Activated CD4-positive, alpha-beta memory T cell treated with anti-CD3 and anti-CD28 coated beads for 36 hours (primary cell): ENCODE measurements at regions of chr13 and their contacts with region 1.

Region 1: DNA sequence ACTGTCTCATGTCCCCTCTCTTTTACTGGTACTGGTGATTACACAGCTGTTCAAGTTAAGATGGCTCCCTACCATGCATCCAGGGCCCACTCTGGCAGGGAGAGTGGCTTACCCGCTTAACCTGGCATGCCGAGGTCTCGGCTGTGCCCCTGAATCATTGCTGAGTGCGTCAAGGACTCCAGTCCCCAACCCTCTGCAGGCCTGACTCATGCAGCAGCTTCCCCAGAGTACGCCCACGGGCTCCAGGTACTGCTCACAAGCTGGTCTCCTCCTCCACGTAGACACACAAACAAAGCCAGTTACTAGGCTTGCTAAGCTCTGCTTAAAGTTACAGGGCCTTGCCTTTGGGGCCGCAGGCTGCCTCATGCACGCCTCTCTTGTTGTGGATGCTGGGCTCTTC is 447.4 kb downstream of the COG6 start:
- DNase-seq: peak; percentile 97
- H3K4me3 Mint-ChIP-seq: peak overlapping the region; percentile 56
- H3K27ac Mint-ChIP-seq: peak overlapping the region; percentile 98
- H3K4me1 Mint-ChIP-seq: peaks cover 55% of the 10 kb centered on the region
- H3K27me3 Mint-ChIP-seq: no peaks in the 10 kb centered on the region

Region 2: GRCh38 chr13:39777527-39778061 is 325.3 kb before region 1 on chr13:
- CTCF ChIA-PET with region 1: interaction called, 3 read pairs
- POLR2A ChIA-PET with region 1: no interaction called
- intact Hi-C with region 1: loop called (anchors 2 kb)
- DNase-seq: peak; percentile 72
- H3K4me3 Mint-ChIP-seq: peak overlapping the region; percentile 4
- H3K27ac Mint-ChIP-seq: peak overlapping the region; percentile 92
- H3K4me1 Mint-ChIP-seq: peaks cover 52% of the 10 kb centered on the region
- H3K27me3 Mint-ChIP-seq: no peaks in the 10 kb centered on the region

Region 3: DNA sequence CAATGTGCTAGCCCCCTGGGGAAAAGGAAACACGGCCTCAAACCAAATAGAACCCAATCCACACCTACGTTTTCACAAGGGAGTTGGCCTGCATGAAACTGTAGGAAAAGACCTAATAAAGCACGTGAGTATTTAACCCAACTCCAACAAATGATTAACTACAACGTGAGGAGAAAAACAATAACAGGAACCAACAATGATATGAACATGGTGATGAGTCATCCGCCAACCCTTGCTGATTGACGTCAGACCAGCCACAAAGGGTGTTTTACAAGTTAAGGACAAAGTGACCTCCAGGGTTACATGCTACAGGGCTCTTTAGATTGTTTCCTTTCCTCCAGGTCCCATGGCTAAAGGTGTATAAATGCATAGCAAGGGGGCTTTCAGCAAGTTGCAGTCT is 13.2 kb after region 1 on chr13:
- CTCF ChIA-PET with region 1: interaction called, 3 read pairs
- POLR2A ChIA-PET with region 1: interaction called, 6 read pairs
- intact Hi-C with region 1: loop called (anchors 1 kb)
- DNase-seq: peak; percentile 77
- H3K4me3 Mint-ChIP-seq: no peak overlapping the region
- H3K27ac Mint-ChIP-seq: peak overlapping the region; percentile 78
- H3K4me1 Mint-ChIP-seq: peaks cover 30% of the 10 kb centered on the region
- H3K27me3 Mint-ChIP-seq: no peaks in the 10 kb centered on the region

Region 4: GRCh38 chr13:40126306-40127085 is 23.6 kb after region 1 on chr13:
- CTCF ChIA-PET with region 1: no interaction called
- POLR2A ChIA-PET with region 1: no interaction called
- intact Hi-C with region 1: no loop called
- DNase-seq: no peak
- H3K4me3 Mint-ChIP-seq: no peak overlapping the region
- H3K27ac Mint-ChIP-seq: no peak overlapping the region
- H3K4me1 Mint-ChIP-seq: peaks cover 41% of the 10 kb centered on the region
- H3K27me3 Mint-ChIP-seq: no peaks in the 10 kb centered on the region

Region 5: DNA sequence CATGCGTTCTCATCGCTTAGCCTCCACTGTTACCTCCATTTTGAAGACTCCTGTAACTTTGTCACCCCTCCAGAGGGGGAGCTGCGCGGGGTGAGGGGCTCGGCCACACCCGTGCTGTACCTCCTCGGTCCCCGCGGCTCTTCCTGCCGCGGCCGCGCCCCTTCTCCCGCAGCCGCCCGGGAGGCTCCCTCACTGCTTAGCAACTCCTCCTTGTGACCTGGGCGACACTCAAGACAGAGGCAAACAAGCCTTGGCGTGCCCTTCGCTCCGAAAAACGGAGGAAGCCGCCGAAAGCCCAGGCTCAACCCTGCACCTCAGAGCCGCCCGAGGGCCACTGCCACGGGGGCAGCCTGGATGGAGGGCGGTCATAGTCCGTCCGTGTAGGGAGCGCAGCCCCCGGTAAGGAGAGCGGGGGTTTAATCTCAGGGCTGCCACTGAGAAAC is 69.3 kb after region 1 on chr13:
- CTCF ChIA-PET with region 1: no interaction called
- POLR2A ChIA-PET with region 1: no interaction called
- intact Hi-C with region 1: loop called (anchors 1 kb)
- DNase-seq: no peak
- H3K4me3 Mint-ChIP-seq: no peak overlapping the region
- H3K27ac Mint-ChIP-seq: no peak overlapping the region
- H3K4me1 Mint-ChIP-seq: peaks cover 23% of the 10 kb centered on the region
- H3K27me3 Mint-ChIP-seq: no peaks in the 10 kb centered on the region

Region 6: DNA sequence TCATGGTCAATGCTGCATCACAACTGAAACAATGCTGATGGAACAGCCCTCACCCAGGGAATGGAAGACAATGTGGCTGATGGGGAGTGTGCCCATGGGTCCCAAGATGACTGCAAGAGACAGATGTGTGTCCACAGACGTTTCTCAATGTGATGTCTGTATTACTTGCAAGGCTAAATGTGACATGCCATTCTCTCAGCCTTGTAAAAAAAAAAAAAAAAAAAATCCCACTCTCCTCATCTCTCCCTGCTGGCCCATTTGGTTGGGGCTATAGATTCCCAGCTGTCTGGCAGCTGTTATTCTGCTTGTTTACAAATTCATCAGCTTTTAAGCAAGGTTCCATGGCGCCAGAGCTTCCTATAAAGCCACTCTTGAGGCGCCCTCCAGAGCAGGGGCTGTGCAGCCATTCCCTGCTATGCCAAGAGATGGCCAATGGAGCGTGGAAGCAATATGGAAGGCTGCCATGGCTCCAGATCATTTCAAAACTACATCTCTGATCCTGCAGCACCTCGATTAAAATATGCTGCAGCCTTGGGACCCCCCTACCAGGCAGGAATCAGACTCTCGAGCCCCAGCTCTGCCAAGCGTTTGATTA is 268.8 kb after region 1 on chr13:
- CTCF ChIA-PET with region 1: no interaction called
- POLR2A ChIA-PET with region 1: no interaction called
- intact Hi-C with region 1: loop called (anchors 5 kb)
- DNase-seq: no peak
- H3K4me3 Mint-ChIP-seq: no peak overlapping the region
- H3K27ac Mint-ChIP-seq: no peak overlapping the region
- H3K4me1 Mint-ChIP-seq: peaks cover 34% of the 10 kb centered on the region
- H3K27me3 Mint-ChIP-seq: peaks cover 1% of the 10 kb centered on the region

Region 7: GRCh38 chr13:40597740-40598370 is 495.0 kb after region 1 on chr13:
- CTCF ChIA-PET with region 1: no interaction called
- POLR2A ChIA-PET with region 1: no interaction called
- intact Hi-C with region 1: loop called (anchors 2 kb)
- DNase-seq: peak; percentile 24
- H3K4me3 Mint-ChIP-seq: peak overlapping the region; percentile 39
- H3K27ac Mint-ChIP-seq: peak overlapping the region; percentile 85
- H3K4me1 Mint-ChIP-seq: peaks cover 87% of the 10 kb centered on the region
- H3K27me3 Mint-ChIP-seq: no peaks in the 10 kb centered on the region